ENCODE measurements at regions of chr19 and their contacts with region 1.

Region 1: DNA sequence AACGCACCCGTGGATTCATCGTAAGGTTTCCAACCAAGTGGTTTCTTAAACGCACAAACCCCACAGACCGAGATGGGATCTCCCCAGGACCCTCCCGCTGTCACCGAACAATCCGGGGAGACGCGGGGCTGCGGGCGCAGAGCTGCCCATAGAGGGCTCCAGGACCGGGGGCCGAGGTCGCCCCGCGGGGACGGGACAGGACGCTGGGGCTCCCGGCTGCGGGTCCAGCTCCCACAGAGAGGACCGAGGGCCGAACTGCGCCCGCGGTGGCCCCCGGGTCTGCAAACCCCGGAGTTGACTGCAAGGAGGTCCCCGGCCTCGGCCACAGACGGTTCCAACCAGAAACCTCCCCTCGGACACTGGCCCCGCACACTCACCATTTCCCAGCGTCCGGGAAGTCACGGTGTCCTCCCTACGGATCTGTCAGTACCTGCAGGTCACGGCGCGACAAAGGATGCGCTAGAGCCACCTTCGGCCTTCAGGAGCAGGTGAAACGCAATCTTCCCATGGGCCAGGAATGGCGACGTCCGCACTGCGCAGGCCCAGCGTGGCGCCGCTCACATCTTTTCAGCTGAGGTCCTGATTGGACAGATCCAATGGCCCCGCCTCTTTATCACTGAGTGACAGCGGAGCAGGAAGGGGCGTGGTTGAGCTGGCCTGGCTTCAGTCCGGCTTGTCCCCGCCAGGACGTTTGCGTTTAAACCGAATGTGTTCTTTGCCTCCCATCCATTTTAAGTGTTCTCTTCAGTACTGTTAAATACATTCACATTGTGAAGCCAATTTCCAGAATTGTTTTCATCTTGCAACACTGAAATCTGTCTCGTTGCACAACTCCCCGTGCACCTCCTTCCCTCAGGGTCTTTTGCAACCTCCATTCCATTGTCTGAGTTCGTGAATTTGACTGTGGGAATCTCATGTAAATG is at the start of gene ZNF14:
- DNase-seq: peak; percentile 91
- ATAC-seq: peak; percentile 100
- H3K4me3 ChIP-seq: peak within 1 kb of the TSS; percentile 76 to 87
- H3K27ac ChIP-seq: peak within 1 kb of the TSS; percentile 59
- H3K4me1 ChIP-seq: peaks cover 0 to 9% of the 10 kb centered on the region in 2 experiments; a peak in 2 of 4 replicates
- H3K27me3 ChIP-seq: no peaks in the 10 kb centered on the region
- CTCF ChIP-seq: peak in 2 of 3 experiments; percentile 17 to 24; a peak in 2 of 6 replicates
- POLR2A ChIP-seq: peak; percentile 94
- RAD21 ChIP-seq: no peak
- total RNA-seq, gene ZNF14: 4.8 TPM

Region 2: GRCh38 chr19:19588546-19588945 is 144.3 kb before region 1 on chr19:
- CTCF ChIA-PET with region 1: no interaction called
- POLR2A ChIA-PET with region 1: no interaction called
- RAD21 ChIA-PET with region 1: no interaction called
- intact Hi-C with region 1: no loop called
- DNase-seq: no peak
- ATAC-seq: peak; percentile 35; the same call in 1 of the 2 replicates
- H3K4me3 ChIP-seq: no peak overlapping the region
- H3K27ac ChIP-seq: no peak overlapping the region
- H3K4me1 ChIP-seq: peaks cover 9 to 25% of the 10 kb centered on the region in 2 experiments
- H3K27me3 ChIP-seq: no peaks in the 10 kb centered on the region
- CTCF ChIP-seq: no peak
- POLR2A ChIP-seq: no peak
- RAD21 ChIP-seq: no peak

Region 3: GRCh38 chr19:19663256-19664038 is 69.4 kb before region 1 on chr19 and contains the start of gene ATP13A1:
- CTCF ChIA-PET with region 1: no interaction called
- POLR2A ChIA-PET with region 1: no interaction called
- RAD21 ChIA-PET with region 1: interaction called in 1 of 2 experiments, 9 read pairs
- intact Hi-C with region 1: loop called (anchors 2 kb)
- DNase-seq: peak; percentile 91
- ATAC-seq: peak; percentile 85
- H3K4me3 ChIP-seq: peak within 1 kb of the TSS; percentile 70 to 96
- H3K27ac ChIP-seq: peak within 1 kb of the TSS; percentile 92
- H3K4me1 ChIP-seq: peaks cover 13 to 37% of the 10 kb centered on the region in 2 experiments; a peak in 3 of 4 replicates
- H3K27me3 ChIP-seq: no peaks in the 10 kb centered on the region
- CTCF ChIP-seq: no peak; a peak in 1 of 6 replicates
- POLR2A ChIP-seq: no peak
- RAD21 ChIP-seq: no peak
- total RNA-seq, gene ATP13A1: 73.7 TPM